Mammary epithelial cell (primary cell): ENCODE measurements at regions of chr13 and their contacts with region 1.

Region 1: DNA sequence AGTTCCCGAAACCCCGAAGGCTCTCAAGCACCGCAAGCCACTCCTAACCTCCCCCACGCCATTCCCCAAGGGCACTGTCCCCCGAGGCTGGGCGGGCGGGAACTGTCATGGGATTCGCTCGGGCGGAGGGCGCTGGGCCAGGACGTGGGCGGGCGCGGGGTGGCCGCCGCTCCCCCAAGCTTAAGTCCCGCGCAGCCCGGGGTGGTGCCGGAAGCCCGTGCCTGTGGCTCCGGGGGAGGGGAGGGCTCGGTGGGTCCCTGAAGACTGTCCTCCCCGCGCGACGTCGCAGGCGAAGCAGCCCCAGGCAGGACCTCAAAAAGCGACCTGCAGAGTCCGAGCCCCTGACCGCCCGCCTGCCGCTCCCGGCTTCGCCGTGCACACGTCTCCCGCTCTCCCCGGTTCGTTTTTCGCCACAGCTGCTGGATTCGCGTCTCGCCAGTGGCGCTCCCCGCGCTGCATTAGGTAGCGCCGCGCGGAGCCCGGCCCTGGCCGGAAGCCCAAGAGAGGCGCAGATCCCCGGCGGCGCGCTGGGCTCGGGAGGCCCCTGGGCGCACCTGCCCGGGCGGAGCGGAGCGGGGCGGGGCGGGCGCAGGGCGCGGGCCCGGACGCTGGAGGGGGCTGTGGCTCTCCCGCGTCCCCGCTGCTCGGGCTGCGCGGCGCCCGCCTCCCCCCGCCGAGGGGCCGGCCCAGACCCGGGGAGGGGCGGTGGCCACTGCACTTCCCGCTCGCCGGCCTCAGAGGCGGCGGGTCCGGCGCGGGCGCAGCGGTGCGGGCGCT is at the start of gene FARP1:
- DNase-seq: peak; percentile 77
- H3K4me3 ChIP-seq: peak within 1 kb of the TSS; percentile 56 to 66 (median 63)
- H3K27ac ChIP-seq: no peak within 1 kb of the TSS
- H3K4me1 ChIP-seq: peaks cover 16% of the 10 kb centered on the region
- H3K27me3 ChIP-seq: peaks cover 4% of the 10 kb centered on the region
- CTCF ChIP-seq: peak in 1 of 2 donors; percentile 24
- total RNA-seq, gene FARP1: 27.5 to 42.8 TPM

Region 2: GRCh38 chr13:97826421-97827012 is 316.1 kb before region 1 on chr13:
- CTCF ChIA-PET with region 1: no interaction called
- dilution Hi-C with region 1: no loop called
- in situ Hi-C with region 1: no loop called
- intact Hi-C with region 1: no loop called
- DNase-seq: no peak
- H3K4me3 ChIP-seq: no peak overlapping the region
- H3K27ac ChIP-seq: no peak overlapping the region
- H3K4me1 ChIP-seq: no peaks in the 10 kb centered on the region
- H3K27me3 ChIP-seq: peaks cover 2% of the 10 kb centered on the region
- CTCF ChIP-seq: no peak

Region 3: DNA sequence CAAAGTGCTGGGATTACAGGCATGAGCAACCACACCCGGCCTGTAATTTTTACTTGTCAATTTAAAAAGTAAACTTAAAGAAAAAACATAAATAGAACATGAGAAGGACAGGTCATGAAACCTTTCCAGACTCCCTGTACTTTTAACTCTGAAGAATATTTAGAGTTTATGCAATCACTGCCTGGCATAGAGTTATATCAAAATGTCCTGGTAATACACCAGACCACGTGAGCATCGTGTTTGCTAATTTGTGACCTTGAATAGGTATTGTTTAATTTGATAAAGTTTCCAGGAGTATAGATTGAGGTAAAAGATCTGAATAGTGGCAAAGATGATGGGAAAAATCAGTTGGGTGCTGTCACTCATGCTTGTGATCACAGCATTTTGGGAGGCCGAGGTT is 115.7 kb after region 1 on chr13:
- CTCF ChIA-PET with region 1: no interaction called
- dilution Hi-C with region 1: no loop called
- in situ Hi-C with region 1: no loop called
- intact Hi-C with region 1: loop called (anchors 5 kb)
- DNase-seq: no peak
- H3K4me3 ChIP-seq: no peak overlapping the region
- H3K27ac ChIP-seq: no peak overlapping the region
- H3K4me1 ChIP-seq: peaks cover 12% of the 10 kb centered on the region
- H3K27me3 ChIP-seq: no peaks in the 10 kb centered on the region
- CTCF ChIP-seq: no peak

Region 4: DNA sequence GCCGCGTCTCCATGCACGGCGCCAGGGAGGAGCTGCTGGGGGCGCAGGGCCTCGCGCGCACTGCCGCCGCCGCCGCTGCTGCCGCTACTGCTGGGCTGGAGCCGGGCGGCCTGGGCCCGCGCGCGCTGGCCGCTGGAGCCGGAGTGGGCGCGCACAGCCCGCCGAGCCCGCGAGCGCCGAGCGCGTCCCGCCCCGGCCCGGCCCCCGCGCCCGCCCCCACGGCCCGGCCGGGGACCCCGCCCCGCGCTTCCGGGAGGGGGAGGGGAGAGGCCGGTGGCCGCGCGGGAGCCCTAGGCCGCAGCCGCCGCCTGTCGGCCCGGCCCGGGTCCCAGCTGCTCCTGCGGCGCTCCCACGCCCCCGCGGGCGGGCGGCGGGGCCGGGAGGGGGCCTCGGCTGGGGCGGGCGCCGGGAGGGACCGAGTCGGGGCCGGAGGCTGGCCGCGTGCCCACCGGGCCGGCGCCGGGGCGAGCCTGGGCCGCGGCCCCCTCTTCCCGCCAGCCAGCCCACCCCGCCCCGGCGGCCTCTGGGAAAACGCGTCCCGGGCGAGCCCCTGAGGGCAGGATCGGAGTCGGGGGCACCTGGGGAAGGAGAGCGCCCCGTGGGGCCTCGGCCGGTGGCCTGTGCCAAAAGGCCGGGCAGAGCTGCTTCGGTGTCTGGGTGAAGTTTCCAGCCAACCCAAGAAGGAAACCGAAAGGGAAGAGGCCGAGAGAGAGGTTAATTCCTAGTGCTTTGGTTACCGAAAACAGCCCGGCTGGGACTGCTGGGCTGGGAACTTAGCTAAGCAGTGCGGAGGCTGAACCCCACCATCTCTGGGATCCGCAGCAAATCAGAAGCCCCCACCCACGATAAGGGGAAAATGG is 434.6 kb after region 1 on chr13 and contains the start of gene STK24:
- CTCF ChIA-PET with region 1: no interaction called
- dilution Hi-C with region 1: no loop called
- in situ Hi-C with region 1: no loop called
- intact Hi-C with region 1: loop called (anchors 2 kb)
- DNase-seq: peak; percentile 66
- H3K4me3 ChIP-seq: peak within 1 kb of the TSS; percentile 64 to 95 (median 76)
- H3K27ac ChIP-seq: peak within 1 kb of the TSS; percentile 82
- H3K4me1 ChIP-seq: peaks cover 31% of the 10 kb centered on the region
- H3K27me3 ChIP-seq: no peaks in the 10 kb centered on the region
- CTCF ChIP-seq: no peak
- total RNA-seq, gene STK24: 114 to 189 TPM

Region 5: DNA sequence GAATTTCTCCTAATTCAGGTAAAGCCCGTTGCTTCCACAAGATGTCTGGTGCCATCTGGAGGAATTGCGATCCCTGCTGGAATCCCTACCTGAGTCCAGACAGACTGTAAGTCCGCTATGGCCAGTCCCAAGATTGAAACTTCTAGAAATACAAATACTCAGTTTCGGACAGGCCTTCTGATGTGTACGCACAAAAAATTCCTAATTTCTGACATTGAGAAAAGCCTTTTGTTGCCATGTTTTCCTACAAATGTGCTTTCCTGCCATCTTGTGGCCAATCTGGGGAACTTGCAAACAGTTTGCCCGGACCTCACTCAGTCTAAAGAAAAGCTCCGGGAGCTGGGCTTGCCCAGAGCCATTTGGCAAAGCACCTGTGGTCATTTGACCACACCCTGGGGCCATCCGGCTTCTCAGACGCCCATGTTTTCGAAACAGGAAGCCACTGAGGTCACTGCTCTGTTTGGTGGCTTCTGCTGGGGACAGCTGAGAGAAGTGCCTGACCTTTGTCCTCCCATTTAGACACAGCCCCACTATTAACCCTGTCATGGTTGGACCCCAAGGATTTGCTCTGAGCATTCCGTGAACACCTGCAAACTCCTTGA is 530.5 kb after region 1 on chr13:
- CTCF ChIA-PET with region 1: no interaction called
- dilution Hi-C with region 1: loop called (anchors 25 kb)
- in situ Hi-C with region 1: loop called in 1 of 2 experiments (anchors 10 kb)
- intact Hi-C with region 1: loop called (anchors 1 kb)
- DNase-seq: peak; percentile 48
- H3K4me3 ChIP-seq: no peak overlapping the region
- H3K27ac ChIP-seq: no peak overlapping the region
- H3K4me1 ChIP-seq: peaks cover 4% of the 10 kb centered on the region
- H3K27me3 ChIP-seq: no peaks in the 10 kb centered on the region
- CTCF ChIP-seq: peak; percentile 84 to 87